Activated CD4-positive, alpha-beta memory T cell treated with anti-CD3 and anti-CD28 coated beads for 36 hours (primary cell): ENCODE measurements at regions of chr14 and their contacts with region 1.

Region 1: GRCh38 chr14:69460093-69460701 is 24.3 kb upstream of the PLEKHD1 start:
- DNase-seq: peak; percentile 77
- H3K4me3 Mint-ChIP-seq: no peak overlapping the region
- H3K27ac Mint-ChIP-seq: no peak overlapping the region
- H3K4me1 Mint-ChIP-seq: no peaks in the 10 kb centered on the region
- H3K27me3 Mint-ChIP-seq: no peaks in the 10 kb centered on the region

Region 2: DNA sequence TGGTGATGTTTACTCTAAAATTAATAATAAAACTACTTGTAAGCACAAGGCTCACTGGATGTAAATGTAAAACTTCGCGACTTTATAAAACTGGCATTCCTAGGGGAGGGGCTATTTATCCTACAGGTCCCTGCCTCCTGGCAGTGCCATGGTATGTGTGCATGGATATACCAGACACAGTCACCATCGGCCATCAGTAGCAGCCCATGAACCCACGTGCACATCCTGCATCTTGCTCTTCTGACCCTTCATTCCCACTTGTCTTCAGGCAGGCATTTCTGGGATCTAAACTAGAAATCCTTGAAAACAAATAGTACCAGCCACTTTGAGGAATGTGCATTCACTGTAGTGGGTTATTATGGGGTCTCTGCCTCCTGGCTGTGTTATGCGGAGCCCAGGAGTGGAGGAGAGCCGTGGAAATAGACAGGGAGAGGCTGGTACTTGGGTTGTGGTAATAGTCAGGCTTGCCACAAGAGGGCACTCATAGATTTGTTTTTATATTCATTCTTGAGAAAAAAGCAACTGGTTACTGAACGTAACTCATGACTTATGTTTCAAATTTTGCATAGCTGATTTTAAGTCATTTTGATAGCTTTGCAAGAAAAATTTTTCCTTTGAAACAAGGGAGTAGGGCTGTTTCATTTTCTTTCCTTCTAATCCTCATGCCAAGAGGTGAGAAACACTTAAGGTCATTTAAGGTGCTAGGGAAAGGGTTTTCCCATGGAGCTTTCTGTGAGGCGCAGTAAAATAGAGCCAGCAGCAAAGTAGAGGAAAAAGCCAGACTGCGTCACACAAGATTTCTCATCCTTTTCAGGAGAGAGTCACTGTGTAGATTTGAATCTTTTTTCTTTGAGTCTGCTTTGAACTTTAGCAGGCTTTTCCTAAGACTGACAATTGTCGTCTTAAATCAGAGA is 217.6 kb before region 1 on chr14:
- CTCF ChIA-PET with region 1: interaction called, 112 read pairs
- POLR2A ChIA-PET with region 1: no interaction called
- intact Hi-C with region 1: loop called (anchors 1 kb)
- DNase-seq: peak; percentile 62
- H3K4me3 Mint-ChIP-seq: no peak overlapping the region
- H3K27ac Mint-ChIP-seq: no peak overlapping the region
- H3K4me1 Mint-ChIP-seq: no peaks in the 10 kb centered on the region
- H3K27me3 Mint-ChIP-seq: no peaks in the 10 kb centered on the region

Region 3: DNA sequence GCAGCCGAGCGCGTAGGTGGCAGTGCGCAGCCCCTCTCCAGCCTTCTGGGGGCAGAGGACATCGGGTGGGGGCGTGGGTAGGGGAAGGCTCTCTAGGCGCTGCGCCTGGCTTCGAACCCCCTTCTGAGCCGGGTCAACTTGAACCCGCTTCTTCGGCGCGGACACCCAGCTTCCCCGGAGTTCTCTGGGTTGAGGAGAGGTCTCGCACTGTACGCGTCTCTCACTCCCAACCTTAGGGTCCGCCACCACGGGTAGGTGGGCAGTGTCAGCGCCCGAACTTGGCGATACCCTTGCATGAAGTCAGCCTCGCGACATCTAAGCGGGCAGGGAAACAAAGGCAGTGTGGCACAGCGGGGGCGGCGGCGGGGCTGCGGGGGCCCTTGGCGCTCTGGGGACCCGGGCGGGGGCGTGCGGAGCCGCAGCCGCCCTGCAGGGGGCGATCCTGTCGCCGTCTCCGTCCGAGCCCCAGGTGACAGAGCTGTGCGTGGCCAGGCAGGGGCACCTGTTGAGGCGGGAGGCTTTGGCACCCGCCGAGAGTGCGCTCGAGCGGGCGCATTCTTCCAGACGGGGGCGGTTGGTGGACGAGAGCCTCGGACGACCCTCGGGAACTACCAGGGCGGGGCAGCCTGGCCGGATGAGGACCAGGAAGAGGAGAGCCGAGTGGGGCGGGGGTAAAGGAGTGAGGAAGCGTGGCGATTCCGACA is 199.2 kb before region 1 on chr14:
- CTCF ChIA-PET with region 1: interaction called, 42 read pairs
- POLR2A ChIA-PET with region 1: no interaction called
- intact Hi-C with region 1: loop called (anchors 1 kb)
- DNase-seq: peak; percentile 67
- H3K4me3 Mint-ChIP-seq: peak overlapping the region; percentile 48
- H3K27ac Mint-ChIP-seq: no peak overlapping the region
- H3K4me1 Mint-ChIP-seq: peaks cover 4% of the 10 kb centered on the region
- H3K27me3 Mint-ChIP-seq: peaks cover 45% of the 10 kb centered on the region

Region 4: DNA sequence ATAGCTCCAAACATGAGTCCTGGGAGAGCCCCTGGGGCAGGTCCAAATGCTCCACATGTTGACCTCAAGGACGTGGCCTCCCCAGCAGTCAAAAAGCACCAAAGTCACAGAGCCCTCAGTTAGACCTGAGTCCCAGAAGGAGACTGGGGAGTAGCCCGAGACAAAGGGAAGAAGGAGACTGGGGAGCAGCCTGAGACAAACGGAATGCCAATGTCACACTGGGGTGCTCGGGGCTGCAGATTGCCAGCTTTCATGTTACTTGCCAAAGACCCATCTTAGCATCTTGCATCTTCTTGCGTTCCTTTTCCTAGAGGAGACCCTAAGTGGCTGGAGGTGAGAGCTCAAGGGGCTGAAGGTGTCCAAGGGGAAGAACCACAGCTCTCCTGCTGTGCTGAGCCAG is 39.2 kb after region 1 on chr14:
- CTCF ChIA-PET with region 1: no interaction called
- POLR2A ChIA-PET with region 1: no interaction called
- intact Hi-C with region 1: no loop called
- DNase-seq: no peak
- H3K4me3 Mint-ChIP-seq: no peak overlapping the region
- H3K27ac Mint-ChIP-seq: no peak overlapping the region
- H3K4me1 Mint-ChIP-seq: no peaks in the 10 kb centered on the region
- H3K27me3 Mint-ChIP-seq: peaks cover 1% of the 10 kb centered on the region

Region 5: GRCh38 chr14:69535230-69535848 is 75.1 kb after region 1 on chr14:
- CTCF ChIA-PET with region 1: no interaction called
- POLR2A ChIA-PET with region 1: no interaction called
- intact Hi-C with region 1: no loop called
- DNase-seq: no peak
- H3K4me3 Mint-ChIP-seq: no peak overlapping the region
- H3K27ac Mint-ChIP-seq: no peak overlapping the region
- H3K4me1 Mint-ChIP-seq: no peaks in the 10 kb centered on the region
- H3K27me3 Mint-ChIP-seq: peaks cover 11% of the 10 kb centered on the region